Left cardiac atrium (tissue), 4 donors: ENCODE measurements at regions of chr10 and their contacts with region 1.

Region 1: DNA sequence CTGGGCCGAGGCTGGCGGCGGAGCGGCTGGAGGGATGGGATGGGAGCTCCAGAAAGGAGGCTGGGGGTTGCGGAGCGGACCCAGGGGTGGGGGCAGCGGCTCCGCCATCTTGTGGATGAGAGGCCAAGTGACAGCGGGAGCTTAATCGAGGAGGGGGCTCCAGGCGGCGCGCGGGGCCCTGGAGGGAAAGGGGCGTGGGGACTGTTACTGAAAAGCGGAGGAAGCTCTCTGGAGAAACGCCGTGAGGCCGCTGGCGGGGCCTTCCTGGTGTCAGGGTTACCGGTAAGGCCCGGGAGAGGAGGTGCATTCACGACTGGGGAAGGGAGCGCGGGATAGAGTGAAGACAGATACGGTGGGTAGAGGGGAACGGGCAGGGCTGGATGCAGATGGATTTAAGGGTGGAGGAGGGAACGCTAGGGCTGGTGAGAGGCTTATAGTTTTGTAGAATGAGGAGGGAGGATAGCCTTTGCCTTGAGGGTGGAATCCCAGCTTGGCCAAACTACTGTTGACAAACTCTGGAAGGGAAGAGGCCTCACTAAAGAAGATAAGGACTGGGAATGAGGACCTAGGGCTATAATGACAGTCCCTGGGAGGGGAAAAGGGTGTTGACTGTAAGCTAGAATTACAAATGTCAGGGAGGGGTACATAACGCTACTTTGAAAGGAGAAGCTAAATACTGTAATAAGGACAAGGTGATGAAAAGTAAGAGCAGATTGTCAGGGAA is 525 bp downstream of the BTRC start:
- DNase-seq: peak; percentile 67
- ATAC-seq: peak; percentile 27 to 52

Region 2: GRCh38 chr10:101195921-101196320 is 158.6 kb before region 1 on chr10:
- intact Hi-C with region 1: no loop called
- DNase-seq: no peak
- ATAC-seq: no peak

Region 3: DNA sequence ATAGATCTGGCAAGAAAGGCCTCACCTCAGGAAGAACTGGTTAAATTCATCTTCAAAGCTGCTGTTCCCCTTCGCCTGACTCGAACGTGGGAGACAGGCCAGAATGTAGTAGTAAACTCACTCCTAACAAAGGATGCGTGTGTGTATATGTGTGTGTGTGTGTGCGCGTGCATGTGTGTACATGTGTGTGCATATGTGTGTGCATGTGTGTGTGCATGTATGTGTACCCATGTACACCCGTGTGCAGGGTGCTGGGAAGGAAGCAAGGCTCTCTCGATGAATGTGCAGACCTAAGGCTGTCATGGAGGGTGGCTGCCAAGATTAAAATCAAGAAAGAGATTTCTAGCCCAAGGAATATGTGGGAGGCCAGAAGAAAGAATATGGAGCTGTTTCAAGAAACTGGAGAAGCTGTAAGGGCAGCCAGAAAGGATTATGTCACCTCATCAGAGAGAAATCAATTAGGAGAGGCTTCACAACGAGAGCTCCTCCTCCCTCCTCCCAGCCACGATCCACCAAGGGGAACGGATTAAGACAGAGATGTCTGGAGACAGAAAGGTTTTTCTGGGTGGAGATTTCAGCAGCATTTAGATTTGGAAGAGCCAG is 91.2 kb before region 1 on chr10:
- intact Hi-C with region 1: no loop called
- DNase-seq: no peak
- ATAC-seq: peak in 1 of 2 donors; percentile 19

Region 4: GRCh38 chr10:101394524-101395133 is 40.1 kb after region 1 on chr10:
- intact Hi-C with region 1: loop called in 1 of 2 experiments (anchors 5 kb)
- DNase-seq: no peak
- ATAC-seq: peak; percentile 57 to 59

Region 5: GRCh38 chr10:101693978-101694673 is 339.6 kb after region 1 on chr10:
- intact Hi-C with region 1: no loop called
- DNase-seq: peak; percentile 69
- ATAC-seq: peak; percentile 86 to 93